Testis (tissue), 5 donors: ENCODE measurements at regions of chr5 and their contacts with region 1.

Region 1: GRCh38 chr5:149551200-149552037 is at the start of gene CSNK1A1:
- DNase-seq: peak; percentile 97
- H3K4me3 ChIP-seq: peak within 1 kb of the TSS; percentile 99 to 100
- H3K27ac ChIP-seq: peak within 1 kb of the TSS; percentile 99 to 100
- H3K4me1 ChIP-seq: peaks cover 9% of the 10 kb centered on the region
- H3K27me3 ChIP-seq: no peaks in the 10 kb centered on the region
- CTCF ChIP-seq: peak; percentile 78 to 97 (median 84)
- POLR2A ChIP-seq: peak; percentile 24
- total RNA-seq, gene CSNK1A1: 148 to 192 TPM

Region 2: GRCh38 chr5:149310488-149310887 is 240.9 kb before region 1 on chr5:
- intact Hi-C with region 1: no loop called
- DNase-seq: no peak
- H3K4me3 ChIP-seq: no peak overlapping the region
- H3K27ac ChIP-seq: no peak overlapping the region
- H3K4me1 ChIP-seq: no peaks in the 10 kb centered on the region
- H3K27me3 ChIP-seq: no peaks in the 10 kb centered on the region
- CTCF ChIP-seq: no peak
- POLR2A ChIP-seq: no peak

Region 3: GRCh38 chr5:149320791-149321330 is 230.6 kb before region 1 on chr5:
- intact Hi-C with region 1: loop called (anchors 10 kb)
- DNase-seq: peak; percentile 94
- H3K4me3 ChIP-seq: no peak overlapping the region
- H3K27ac ChIP-seq: peak overlapping the region; percentile 55 to 65
- H3K4me1 ChIP-seq: peaks cover 15% of the 10 kb centered on the region
- H3K27me3 ChIP-seq: no peaks in the 10 kb centered on the region
- CTCF ChIP-seq: no peak
- POLR2A ChIP-seq: no peak

Region 4: GRCh38 chr5:149442563-149443182 is 108.7 kb before region 1 on chr5:
- intact Hi-C with region 1: loop called (anchors 5 kb)
- DNase-seq: peak; percentile 87
- H3K4me3 ChIP-seq: no peak overlapping the region
- H3K27ac ChIP-seq: peak overlapping the region; percentile 78 to 79
- H3K4me1 ChIP-seq: peaks cover 15% of the 10 kb centered on the region
- H3K27me3 ChIP-seq: no peaks in the 10 kb centered on the region
- CTCF ChIP-seq: peak; percentile 90 to 92 (median 92)
- POLR2A ChIP-seq: no peak

Region 5: DNA sequence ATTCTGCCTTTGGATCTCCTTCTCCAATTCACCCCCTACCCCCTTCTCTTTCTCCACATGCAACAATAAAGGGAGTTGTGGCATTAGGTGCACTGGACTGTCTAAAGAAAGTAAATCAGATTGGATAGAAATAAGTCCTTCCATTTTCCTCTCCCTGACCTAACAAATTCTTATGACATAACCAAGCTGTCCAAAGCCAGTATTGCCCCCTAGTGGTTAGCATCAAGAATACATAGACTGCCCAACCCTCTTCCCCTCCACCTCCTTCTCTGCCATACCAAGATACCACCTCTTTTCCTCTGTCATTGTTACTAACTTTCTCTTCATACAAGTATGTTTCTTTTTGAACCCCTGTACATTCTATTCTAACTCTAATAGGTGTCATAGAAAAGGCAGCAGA is 224.4 kb after region 1 on chr5:
- intact Hi-C with region 1: no loop called
- DNase-seq: no peak
- H3K4me3 ChIP-seq: no peak overlapping the region
- H3K27ac ChIP-seq: no peak overlapping the region
- H3K4me1 ChIP-seq: no peaks in the 10 kb centered on the region
- H3K27me3 ChIP-seq: no peaks in the 10 kb centered on the region
- CTCF ChIP-seq: peak in 2 of 3 experiments; percentile 12 to 43
- POLR2A ChIP-seq: no peak

Region 6: GRCh38 chr5:150227606-150228273 is 676.3 kb after region 1 on chr5:
- intact Hi-C with region 1: no loop called
- DNase-seq: no peak
- H3K4me3 ChIP-seq: no peak overlapping the region
- H3K27ac ChIP-seq: no peak overlapping the region
- H3K4me1 ChIP-seq: no peaks in the 10 kb centered on the region
- H3K27me3 ChIP-seq: no peaks in the 10 kb centered on the region
- CTCF ChIP-seq: no peak
- POLR2A ChIP-seq: no peak